ENCODE measurements at regions of chr18 and their contacts with region 1.

Region 1: GRCh38 chr18:41744421-41745030 is 210.5 kb upstream of the PIK3C3 start:
- DNase-seq: no peak
- H3K4me3 ChIP-seq: no peak overlapping the region
- H3K27ac ChIP-seq: no peak overlapping the region
- H3K4me1 ChIP-seq: no peaks in the 10 kb centered on the region
- H3K27me3 ChIP-seq: no peaks in the 10 kb centered on the region
- CTCF ChIP-seq: no peak

Region 2: DNA sequence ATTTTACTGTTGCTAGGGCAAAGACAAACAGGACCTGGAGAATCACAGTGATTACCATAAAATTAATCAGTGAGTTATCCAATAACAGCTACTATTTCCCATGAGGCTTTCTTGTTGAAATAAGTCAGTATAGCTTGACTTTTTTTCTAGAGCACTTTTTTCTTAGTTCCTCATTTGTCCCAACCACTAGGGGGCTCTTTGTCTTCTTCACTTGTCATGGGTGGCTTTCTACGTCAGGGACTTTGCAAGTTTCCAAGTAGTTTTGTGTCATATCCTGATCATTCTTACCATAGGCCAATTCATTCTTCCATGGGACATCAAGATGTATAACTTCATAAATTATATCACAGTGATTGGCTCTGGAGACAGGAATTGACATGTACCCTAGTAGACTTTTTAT is 809.1 kb before region 1 on chr18:
- intact Hi-C with region 1: loop called (anchors 5 kb)
- DNase-seq: no peak
- H3K4me3 ChIP-seq: no peak overlapping the region
- H3K27ac ChIP-seq: no peak overlapping the region
- H3K4me1 ChIP-seq: no peaks in the 10 kb centered on the region
- H3K27me3 ChIP-seq: no peaks in the 10 kb centered on the region
- CTCF ChIP-seq: no peak

Measured in colonic mucosa (tissue), 4 donors.